Activated CD8-positive, alpha-beta T cell treated with anti-CD3 and anti-CD28 coated beads for 36 hours (primary cell): ENCODE measurements at regions of chr1 and their contacts with region 1.

Region 1: GRCh38 chr1:234610348-234611152 is 572 bp upstream of the IRF2BP2 start:
- DNase-seq: peak; percentile 94
- ATAC-seq: peak; percentile 63
- H3K4me3 Mint-ChIP-seq: peak overlapping the region; percentile 92
- H3K27ac Mint-ChIP-seq: peak overlapping the region; percentile 99
- H3K4me1 Mint-ChIP-seq: peaks cover 31% of the 10 kb centered on the region
- H3K27me3 Mint-ChIP-seq: no peaks in the 10 kb centered on the region
- CTCF ChIP-seq: no peak

Region 2: GRCh38 chr1:234478481-234479309 is 131.9 kb before region 1 on chr1 and contains the start of gene TARBP1:
- CTCF ChIA-PET with region 1: no interaction called
- POLR2A ChIA-PET with region 1: interaction called, 12 read pairs
- intact Hi-C with region 1: no loop called
- DNase-seq: peak; percentile 79
- ATAC-seq: peak; percentile 83
- H3K4me3 Mint-ChIP-seq: peak within 1 kb of the TSS; percentile 88
- H3K27ac Mint-ChIP-seq: peak within 1 kb of the TSS; percentile 79
- H3K4me1 Mint-ChIP-seq: peaks cover 49% of the 10 kb centered on the region
- H3K27me3 Mint-ChIP-seq: peaks cover 10% of the 10 kb centered on the region
- CTCF ChIP-seq: no peak
- total RNA-seq, gene TARBP1: 53.9 to 61.3 TPM

Region 3: GRCh38 chr1:234599617-234600417 is 10.7 kb before region 1 on chr1:
- CTCF ChIA-PET with region 1: interaction called, 16 read pairs
- POLR2A ChIA-PET with region 1: interaction called, 67 read pairs
- intact Hi-C with region 1: no loop called
- DNase-seq: peak; percentile 86
- ATAC-seq: peak; percentile 77
- H3K4me3 Mint-ChIP-seq: peak overlapping the region; percentile 87
- H3K27ac Mint-ChIP-seq: peak overlapping the region; percentile 98
- H3K4me1 Mint-ChIP-seq: peaks cover 53% of the 10 kb centered on the region
- H3K27me3 Mint-ChIP-seq: no peaks in the 10 kb centered on the region
- CTCF ChIP-seq: no peak

Region 4: DNA sequence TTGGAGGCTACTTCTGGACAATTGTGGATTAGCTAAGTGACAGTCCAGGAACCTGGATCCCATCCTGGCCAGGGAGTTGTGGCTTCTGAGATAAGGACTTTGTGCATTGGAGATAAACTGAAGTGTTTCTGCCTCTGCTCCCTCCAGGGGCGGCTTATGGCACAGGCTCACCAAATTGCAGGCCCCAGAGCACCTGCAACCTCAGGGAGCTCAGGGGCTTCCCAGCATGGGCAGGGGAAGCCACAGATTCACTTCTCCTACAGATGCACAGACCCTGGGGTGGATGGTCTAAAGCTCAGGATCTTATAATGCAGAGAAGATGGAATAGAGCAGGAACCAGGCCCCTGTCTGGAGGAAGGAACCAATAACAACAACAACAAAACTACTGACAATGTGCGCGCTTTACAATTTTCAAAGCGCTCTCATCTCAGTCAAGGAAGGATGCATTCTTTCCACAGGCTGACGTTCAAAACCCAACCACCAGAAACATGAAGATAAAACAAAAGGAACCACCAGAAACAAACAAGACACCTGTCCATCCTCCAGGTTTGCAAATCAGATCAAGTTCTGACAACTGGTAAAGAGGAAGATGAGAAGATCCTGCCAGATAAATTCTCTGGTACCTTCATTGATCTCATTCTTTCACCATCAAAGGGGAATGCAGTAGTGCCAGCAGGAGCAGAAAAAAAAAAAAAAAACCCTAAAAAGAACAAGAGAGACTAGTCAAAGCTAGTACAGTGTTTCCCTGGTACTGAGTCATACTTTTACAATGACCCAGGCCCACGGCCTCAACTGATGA is 120.4 kb after region 1 on chr1:
- CTCF ChIA-PET with region 1: interaction called, 6 read pairs
- POLR2A ChIA-PET with region 1: interaction called, 132 read pairs
- intact Hi-C with region 1: loop called (anchors 2 kb)
- DNase-seq: peak; percentile 83
- ATAC-seq: peak; percentile 87
- H3K4me3 Mint-ChIP-seq: peak overlapping the region; percentile 47
- H3K27ac Mint-ChIP-seq: peak overlapping the region; percentile 94
- H3K4me1 Mint-ChIP-seq: peaks cover 77% of the 10 kb centered on the region
- H3K27me3 Mint-ChIP-seq: no peaks in the 10 kb centered on the region
- CTCF ChIP-seq: peak; percentile 33

Region 5: DNA sequence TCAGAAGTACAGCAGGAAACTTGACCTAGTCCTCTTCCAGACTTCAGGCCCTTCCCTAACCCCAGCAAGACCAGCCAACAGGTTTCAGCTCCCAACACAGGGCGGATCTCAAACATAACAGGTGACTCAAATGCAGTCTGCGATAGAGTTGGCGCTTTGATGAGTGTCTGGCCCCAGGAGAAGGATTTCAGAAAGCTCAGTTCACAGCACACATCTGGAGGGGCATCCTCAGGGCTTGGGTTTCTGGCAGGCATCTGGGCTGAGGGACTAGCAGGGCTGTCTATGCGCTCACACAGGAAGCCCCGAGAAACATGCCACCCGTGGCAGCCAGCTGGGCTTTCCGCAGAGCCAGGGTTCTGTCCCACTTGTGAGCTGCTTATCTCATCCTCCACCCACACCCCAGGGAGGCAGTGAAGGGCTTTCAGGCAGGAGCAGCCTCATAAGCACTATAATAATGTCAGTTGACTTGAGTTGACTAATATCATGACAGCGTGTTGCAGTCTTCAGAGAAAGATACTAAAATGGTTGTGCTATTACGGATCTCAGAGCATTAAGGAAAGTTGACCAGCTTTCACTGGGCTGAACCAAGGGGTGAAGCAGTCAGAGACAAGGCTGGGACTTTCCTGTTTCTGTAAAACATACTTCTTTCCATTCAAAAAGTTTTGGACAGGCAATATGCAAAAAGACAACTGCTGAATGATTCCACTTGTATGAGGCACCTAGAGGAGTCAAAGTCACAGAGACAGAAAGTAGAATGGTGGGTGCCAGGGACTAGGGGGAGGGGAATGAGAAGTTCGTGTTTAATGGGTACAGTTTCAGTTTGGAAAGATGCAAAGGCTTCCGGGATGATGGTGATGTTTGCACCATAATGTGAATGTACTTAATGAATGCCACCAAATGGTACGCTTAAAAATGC is 232.4 kb after region 1 on chr1:
- CTCF ChIA-PET with region 1: interaction called, 5 read pairs
- POLR2A ChIA-PET with region 1: interaction called, 17 read pairs
- intact Hi-C with region 1: loop called (anchors 2 kb)
- DNase-seq: peak; percentile 96
- ATAC-seq: peak; percentile 85
- H3K4me3 Mint-ChIP-seq: peak overlapping the region; percentile 57
- H3K27ac Mint-ChIP-seq: peak overlapping the region; percentile 94
- H3K4me1 Mint-ChIP-seq: peaks cover 82% of the 10 kb centered on the region
- H3K27me3 Mint-ChIP-seq: no peaks in the 10 kb centered on the region
- CTCF ChIP-seq: no peak

Region 6: GRCh38 chr1:234978397-234979295 is 368.1 kb after region 1 on chr1:
- CTCF ChIA-PET with region 1: no interaction called
- POLR2A ChIA-PET with region 1: interaction called, 24 read pairs
- intact Hi-C with region 1: no loop called
- DNase-seq: peak; percentile 81
- ATAC-seq: peak; percentile 52
- H3K4me3 Mint-ChIP-seq: peak overlapping the region; percentile 68
- H3K27ac Mint-ChIP-seq: peak overlapping the region; percentile 92
- H3K4me1 Mint-ChIP-seq: peaks cover 69% of the 10 kb centered on the region
- H3K27me3 Mint-ChIP-seq: no peaks in the 10 kb centered on the region
- CTCF ChIP-seq: no peak